Activated B cell treated with CpG ODN at 0.5 μM for 24 hours (primary cell): ENCODE measurements at regions of chr1 and their contacts with region 1.

Region 1: DNA sequence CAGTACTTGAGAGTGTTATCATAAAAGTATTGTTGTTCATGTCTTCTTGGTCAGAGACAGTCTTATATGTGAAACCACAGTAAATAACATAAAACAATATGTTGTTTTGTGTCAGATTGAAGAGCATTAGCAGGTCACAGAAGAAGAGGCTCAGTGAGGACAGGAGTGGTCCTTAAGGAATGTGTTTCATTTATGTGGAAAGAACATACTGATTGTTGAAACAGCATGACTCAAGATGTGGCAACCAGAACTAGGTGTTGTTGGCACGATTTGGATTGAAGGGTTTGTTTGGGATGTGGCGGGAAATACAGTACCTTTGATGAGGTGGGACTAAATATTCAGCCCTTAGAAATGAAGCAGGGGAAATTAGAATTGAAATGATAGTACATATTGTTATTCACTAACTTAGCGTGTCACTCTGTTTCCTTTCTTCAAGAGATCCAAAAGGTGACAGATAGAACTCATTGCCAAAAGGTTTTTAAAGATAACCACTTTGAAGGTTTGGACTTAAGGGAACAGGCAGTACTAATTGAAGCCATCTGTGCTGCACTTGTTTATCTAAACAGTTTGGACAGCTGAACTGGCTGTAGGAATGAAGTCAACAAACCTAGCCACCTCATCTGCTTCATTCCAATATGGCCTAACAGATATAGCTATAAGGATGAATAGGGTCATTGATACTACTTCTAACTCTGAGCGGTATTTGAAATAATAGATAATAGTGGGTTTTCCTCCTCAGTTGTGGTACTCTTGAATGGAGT is 14.4 kb downstream of the RALGPS2 start:
- DNase-seq: no peak
- ATAC-seq: no peak
- H3K4me3 Mint-ChIP-seq: no peak overlapping the region
- H3K27ac Mint-ChIP-seq: peak overlapping the region; percentile 73
- H3K4me1 Mint-ChIP-seq: peaks cover 72% of the 10 kb centered on the region
- H3K27me3 Mint-ChIP-seq: no peaks in the 10 kb centered on the region
- CTCF ChIP-seq: no peak

Region 2: DNA sequence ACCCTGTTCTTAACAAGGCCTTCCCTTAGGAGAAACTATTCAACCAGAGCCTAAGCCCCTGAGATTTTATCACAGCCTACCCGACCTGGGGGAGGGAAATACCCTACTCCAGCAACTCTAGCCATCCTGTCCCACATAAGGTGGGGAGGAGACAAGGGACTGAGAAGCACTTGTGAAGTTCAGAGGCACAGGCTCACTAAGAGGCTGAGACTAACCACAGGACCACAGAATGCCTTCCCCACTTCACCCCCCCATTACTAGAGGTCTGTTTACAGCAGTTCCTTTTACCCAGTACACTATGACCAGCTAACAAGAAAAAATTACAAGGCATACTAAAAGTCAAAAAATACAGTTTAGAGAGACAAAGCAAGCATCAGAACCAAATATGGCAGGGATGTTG is 139.7 kb before region 1 on chr1:
- CTCF ChIA-PET with region 1: no interaction called
- POLR2A ChIA-PET with region 1: no interaction called
- intact Hi-C with region 1: no loop called
- DNase-seq: no peak
- ATAC-seq: peak; percentile 69
- H3K4me3 Mint-ChIP-seq: peak overlapping the region; percentile 30
- H3K27ac Mint-ChIP-seq: peak overlapping the region; percentile 88
- H3K4me1 Mint-ChIP-seq: peaks cover 91% of the 10 kb centered on the region
- H3K27me3 Mint-ChIP-seq: no peaks in the 10 kb centered on the region
- CTCF ChIP-seq: no peak

Region 3: DNA sequence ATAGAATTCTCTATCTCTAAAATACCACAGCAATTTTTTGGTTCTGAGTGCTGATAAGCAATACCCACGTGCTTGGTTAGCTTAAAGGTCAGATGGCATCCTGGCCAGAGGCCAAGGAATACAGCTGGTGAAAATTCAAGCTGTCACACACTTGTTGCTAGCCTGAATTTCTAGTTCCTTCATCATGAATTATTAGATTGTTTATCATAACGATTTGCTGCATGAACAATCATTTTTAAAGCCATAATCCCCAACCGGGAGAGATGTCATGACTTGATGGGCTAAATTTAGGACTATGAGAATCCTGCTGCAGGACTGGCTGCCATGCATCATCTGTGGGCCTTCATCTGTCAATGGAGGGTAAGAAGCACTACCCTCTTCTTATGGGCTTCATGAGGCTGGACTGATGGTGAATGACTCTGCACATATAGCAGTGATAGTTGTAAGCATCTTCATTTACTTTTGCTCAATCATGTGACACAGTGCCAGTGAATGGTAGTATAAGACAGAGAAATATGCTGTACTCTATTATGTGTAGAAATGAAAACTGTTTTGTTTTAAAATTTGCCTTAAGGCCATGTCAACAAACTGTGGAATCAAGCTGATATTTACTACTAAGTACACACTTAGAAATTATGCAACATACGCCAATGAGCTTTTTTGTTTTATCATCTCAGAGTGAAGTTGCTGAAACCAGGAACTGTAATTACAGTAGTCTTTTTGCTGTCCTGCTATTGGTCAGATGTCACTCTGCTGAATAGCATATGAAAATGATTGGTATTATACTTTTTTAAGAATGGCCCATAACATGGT is 95.0 kb before region 1 on chr1:
- CTCF ChIA-PET with region 1: no interaction called
- POLR2A ChIA-PET with region 1: no interaction called
- intact Hi-C with region 1: no loop called
- DNase-seq: no peak
- ATAC-seq: no peak
- H3K4me3 Mint-ChIP-seq: no peak overlapping the region
- H3K27ac Mint-ChIP-seq: no peak overlapping the region
- H3K4me1 Mint-ChIP-seq: peaks cover 64% of the 10 kb centered on the region
- H3K27me3 Mint-ChIP-seq: no peaks in the 10 kb centered on the region
- CTCF ChIP-seq: no peak

Region 4: DNA sequence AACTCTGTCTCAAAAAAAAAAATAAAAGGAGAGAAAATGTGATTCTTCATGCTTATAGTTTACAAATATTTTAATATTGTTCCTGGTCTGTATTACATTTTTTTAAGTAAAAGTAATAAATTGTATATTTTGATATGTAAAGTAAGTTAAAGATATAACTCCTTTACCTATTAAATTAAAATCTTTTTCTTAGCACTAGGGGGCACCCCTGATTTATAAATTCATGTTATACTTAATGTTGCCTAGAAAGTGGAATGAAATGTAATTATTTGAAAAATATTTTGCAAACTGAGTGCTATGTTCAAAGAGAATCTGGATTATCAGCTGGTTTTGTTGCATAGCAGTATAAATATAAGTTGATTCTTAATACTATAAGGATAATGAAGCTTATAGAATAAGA is 34.8 kb after region 1 on chr1:
- CTCF ChIA-PET with region 1: no interaction called
- POLR2A ChIA-PET with region 1: interaction called, 3 read pairs
- intact Hi-C with region 1: loop called (anchors 5 kb)
- DNase-seq: no peak
- ATAC-seq: peak; percentile 54
- H3K4me3 Mint-ChIP-seq: no peak overlapping the region
- H3K27ac Mint-ChIP-seq: peak overlapping the region; percentile 61
- H3K4me1 Mint-ChIP-seq: peaks cover 59% of the 10 kb centered on the region
- H3K27me3 Mint-ChIP-seq: no peaks in the 10 kb centered on the region
- CTCF ChIP-seq: no peak

Region 5: GRCh38 chr1:180617774-180618395 is 1878.4 kb after region 1 on chr1:
- CTCF ChIA-PET with region 1: no interaction called
- POLR2A ChIA-PET with region 1: no interaction called
- intact Hi-C with region 1: no loop called
- DNase-seq: no peak
- ATAC-seq: no peak
- H3K4me3 Mint-ChIP-seq: no peak overlapping the region
- H3K27ac Mint-ChIP-seq: no peak overlapping the region
- H3K4me1 Mint-ChIP-seq: no peaks in the 10 kb centered on the region
- H3K27me3 Mint-ChIP-seq: no peaks in the 10 kb centered on the region
- CTCF ChIP-seq: no peak